ENCODE measurements at regions of chr11 and their contacts with region 1.

Region 1: DNA sequence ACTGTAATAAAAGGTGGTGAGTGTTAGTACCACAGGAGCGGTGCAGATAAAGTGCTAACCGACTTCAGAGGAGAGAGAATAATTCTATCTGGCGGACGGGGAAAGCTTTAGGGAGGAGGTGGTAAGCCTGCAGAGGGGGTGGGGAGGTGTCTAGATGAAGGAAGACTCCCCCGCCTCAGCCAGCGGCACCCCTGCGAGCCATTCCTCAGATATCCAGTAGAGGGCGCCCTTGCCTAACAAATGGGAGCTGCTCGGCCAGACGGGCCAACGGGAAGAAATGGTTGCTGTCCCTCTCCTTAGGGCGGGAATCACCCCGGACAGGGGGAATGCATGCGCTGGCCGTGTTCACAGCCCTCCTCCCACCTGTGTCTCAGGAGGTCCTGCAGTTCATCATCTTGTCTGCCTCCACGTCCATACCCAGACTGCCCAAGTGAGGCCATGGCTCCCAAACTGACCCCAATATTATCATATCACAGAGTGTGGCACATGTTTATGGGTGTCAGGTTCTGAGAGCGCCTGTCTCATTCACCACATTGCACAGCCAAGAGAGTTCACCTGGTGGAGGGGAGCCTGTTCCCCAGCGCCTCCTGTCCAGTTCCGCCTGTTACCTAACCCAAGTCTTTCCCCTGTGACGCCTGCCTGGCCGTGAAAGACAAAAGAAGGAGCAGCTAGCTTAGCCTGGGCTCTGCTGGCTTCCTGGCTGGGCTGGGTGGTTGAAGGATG is 85.5 kb downstream of the ST3GAL4 start:
- DNase-seq: peak; percentile 86
- ATAC-seq: peak; percentile 91
- H3K4me3 ChIP-seq: no peak overlapping the region
- H3K27ac ChIP-seq: no peak overlapping the region
- H3K4me1 ChIP-seq: peaks cover 7% of the 10 kb centered on the region
- H3K27me3 ChIP-seq: no peaks in the 10 kb centered on the region
- CTCF ChIP-seq: peak; percentile 99

Region 2: GRCh38 chr11:126480410-126481302 is 39.7 kb after region 1 on chr11:
- intact Hi-C with region 1: loop called (anchors 2 kb)
- DNase-seq: peak; percentile 80
- ATAC-seq: peak; percentile 96
- H3K4me3 ChIP-seq: no peak overlapping the region
- H3K27ac ChIP-seq: peak overlapping the region; percentile 78
- H3K4me1 ChIP-seq: peaks cover 4% of the 10 kb centered on the region
- H3K27me3 ChIP-seq: no peaks in the 10 kb centered on the region
- CTCF ChIP-seq: peak; percentile 93

Region 3: DNA sequence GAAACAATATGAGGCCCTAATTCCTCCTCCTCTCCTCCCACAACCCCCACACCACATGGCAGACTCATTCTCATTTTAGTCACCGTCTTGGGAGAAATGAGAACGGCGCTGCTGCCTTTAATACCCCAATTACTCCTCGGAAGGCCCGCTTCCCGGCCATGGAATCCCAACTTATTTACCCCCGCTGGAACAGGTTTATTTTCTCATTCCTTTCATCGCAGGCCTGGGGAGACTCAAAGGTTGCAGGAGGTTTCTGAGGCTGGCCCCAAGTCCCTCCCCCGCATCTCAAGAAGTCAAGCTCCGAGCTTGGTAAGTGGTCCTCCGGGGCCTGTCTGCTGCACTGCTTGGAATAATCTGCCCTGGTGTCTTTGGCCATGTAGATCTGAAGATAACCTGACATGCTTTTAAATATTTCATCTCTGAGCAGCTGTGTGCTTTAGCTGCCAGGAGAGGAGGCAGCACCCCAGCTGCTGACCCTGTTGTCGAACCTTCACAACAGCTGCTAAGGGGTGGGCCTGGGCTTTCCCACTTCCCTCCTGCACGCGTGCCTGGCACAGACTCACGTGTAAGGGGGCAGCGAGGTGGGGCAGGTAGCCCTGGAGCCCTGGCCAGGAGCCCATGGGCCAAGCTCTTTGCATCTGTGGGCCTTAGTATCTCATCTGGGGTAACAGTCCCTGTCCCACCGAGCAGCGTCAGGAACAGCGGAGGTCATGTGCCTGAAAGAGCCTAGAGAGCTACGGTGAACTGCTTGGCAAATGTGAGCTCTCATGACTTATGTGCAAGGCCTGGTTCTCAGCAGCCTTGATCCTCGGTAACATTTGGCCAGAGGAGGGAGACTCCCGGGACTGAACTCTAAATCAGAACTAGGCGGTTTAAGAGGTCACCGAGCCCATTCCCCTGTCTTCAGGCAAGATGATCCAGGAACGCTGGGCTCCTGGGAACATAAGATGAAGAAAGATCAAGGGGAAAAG is 79.1 kb after region 1 on chr11:
- intact Hi-C with region 1: no loop called
- DNase-seq: peak; percentile 35
- ATAC-seq: no peak
- H3K4me3 ChIP-seq: no peak overlapping the region
- H3K27ac ChIP-seq: no peak overlapping the region
- H3K4me1 ChIP-seq: no peaks in the 10 kb centered on the region
- H3K27me3 ChIP-seq: no peaks in the 10 kb centered on the region
- CTCF ChIP-seq: no peak